Aorta (tissue), 5 donors: ENCODE measurements at regions of chr4 and their contacts with region 1.

Region 1: DNA sequence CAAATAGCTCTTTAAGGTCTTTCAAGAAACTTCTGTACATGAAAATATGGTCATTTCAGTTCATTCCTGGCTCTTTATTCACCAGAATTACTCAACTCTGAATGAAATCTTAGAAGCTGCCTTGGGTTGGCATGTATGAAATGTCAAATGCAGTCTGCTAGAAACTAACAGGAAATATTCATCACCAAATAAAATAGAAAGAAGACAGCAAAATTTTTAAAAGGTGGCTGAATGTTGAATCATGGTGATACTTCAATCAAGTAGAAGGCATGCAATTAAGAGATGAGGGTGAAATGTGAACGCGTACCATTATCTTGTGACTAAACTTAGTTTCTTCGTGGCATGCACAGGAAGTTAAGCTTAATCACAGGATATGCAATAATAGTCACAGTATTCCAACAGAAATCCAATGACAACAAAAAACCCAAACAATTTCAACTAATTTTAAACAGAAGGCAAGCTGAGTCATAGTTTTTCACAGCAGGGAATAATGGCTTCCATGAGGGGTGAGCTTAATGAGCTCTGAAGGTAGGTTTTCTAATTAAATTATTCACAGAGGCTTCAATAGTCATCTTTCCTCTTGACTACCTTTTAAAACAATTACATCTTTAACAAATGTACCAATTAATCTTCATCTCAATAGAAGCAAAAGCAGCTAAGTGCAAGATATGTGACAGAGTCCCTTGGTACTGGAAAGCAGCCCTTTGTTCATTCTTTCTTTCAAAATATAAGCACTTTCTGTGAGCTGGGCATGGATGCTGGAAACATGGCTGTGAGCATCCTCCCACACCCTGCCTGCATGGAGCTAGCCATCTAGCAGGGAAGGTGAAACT is 44.5 kb downstream of the SCFD2 start:
- DNase-seq: no peak
- ATAC-seq: peak; percentile 68
- H3K4me3 ChIP-seq: peak overlapping the region in 1 of 2 donors; percentile 48
- H3K27ac ChIP-seq: peak overlapping the region; percentile 49 to 94
- H3K4me1 ChIP-seq: peaks cover 0 to 4% of the 10 kb centered on the region in 2 donors
- H3K27me3 ChIP-seq: no peaks in the 10 kb centered on the region

Region 2: GRCh38 chr4:52143815-52144214 is 1177.6 kb before region 1 on chr4:
- intact Hi-C with region 1: no loop called
- DNase-seq: no peak
- ATAC-seq: peak; percentile 62
- H3K4me3 ChIP-seq: no peak overlapping the region
- H3K27ac ChIP-seq: no peak overlapping the region
- H3K4me1 ChIP-seq: no peaks in the 10 kb centered on the region
- H3K27me3 ChIP-seq: peaks cover 0 to 2% of the 10 kb centered on the region in 2 donors

Region 3: DNA sequence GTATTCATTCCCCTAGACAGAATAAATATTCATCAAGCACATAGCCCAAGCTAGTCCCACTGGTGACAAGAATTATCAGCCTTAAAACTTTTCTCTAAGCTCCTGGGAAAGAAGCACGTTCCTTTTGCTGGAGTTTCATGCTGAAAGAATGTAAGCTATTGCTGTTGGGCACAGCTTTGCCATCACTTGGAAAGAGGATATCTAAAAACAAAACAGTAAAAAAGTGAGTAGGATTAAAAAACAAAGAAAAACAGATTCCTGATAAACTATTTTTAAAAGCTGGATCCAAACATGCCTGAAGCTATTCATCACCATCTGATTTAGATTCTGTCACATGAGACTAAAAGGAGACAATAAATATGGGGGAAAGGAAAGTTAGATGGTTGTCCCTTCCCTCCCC is 132.4 kb before region 1 on chr4:
- intact Hi-C with region 1: no loop called
- DNase-seq: no peak
- ATAC-seq: peak; percentile 28
- H3K4me3 ChIP-seq: no peak overlapping the region
- H3K27ac ChIP-seq: peak overlapping the region; percentile 82 to 88
- H3K4me1 ChIP-seq: peaks cover 0 to 7% of the 10 kb centered on the region in 2 donors
- H3K27me3 ChIP-seq: no peaks in the 10 kb centered on the region

Region 4: GRCh38 chr4:53377319-53378170 is 56.2 kb after region 1 on chr4 and contains the start of gene FIP1L1:
- intact Hi-C with region 1: loop called in 1 of 2 experiments (anchors 5 kb)
- DNase-seq: peak; percentile 96 to 98
- ATAC-seq: peak; percentile 99
- H3K4me3 ChIP-seq: peak within 1 kb of the TSS; percentile 36 to 98
- H3K27ac ChIP-seq: peak within 1 kb of the TSS in 1 of 2 donors; percentile 34
- H3K4me1 ChIP-seq: no peaks in the 10 kb centered on the region
- H3K27me3 ChIP-seq: no peaks in the 10 kb centered on the region
- total RNA-seq, gene FIP1L1: 42.6 to 49.8 TPM

Region 5: DNA sequence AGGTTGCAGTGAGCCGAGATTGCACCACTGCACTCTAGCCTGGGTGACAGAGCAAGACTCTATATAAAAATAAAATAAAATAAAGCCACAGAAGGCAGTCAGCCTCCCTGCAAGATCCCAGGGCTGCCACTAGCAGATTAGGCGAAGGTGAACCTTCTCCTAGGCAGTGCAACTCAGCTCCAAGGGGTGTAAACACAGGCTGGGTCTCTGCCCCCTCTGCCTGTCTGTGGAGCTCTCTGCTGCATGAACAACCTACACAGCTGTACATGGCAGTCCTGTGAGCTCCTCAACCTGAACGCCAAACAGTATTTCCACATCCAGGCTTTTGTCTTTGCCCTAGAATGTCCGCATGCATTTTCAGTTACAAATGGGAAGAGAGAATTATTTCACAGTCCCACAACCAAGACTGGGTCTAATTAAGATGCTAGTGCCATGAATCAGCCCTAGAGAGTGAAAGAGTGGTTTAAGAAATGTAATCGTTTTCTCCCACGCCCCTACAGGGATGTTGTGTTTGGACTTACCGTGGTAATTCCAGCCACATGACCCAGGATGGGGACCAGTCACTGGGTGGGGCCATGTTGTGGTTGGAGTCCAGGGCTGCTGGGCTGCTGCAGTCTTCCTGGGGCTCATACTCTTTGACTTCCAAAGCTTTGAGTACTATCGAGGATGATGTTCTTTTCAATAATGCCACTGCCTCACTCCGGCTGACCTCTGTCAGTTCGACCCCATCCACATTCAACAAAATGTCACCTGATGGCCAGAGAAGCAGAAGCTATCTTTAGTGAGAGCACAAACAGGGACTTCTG is 155.1 kb after region 1 on chr4:
- intact Hi-C with region 1: no loop called
- DNase-seq: peak; percentile 80 to 83
- ATAC-seq: peak; percentile 80
- H3K4me3 ChIP-seq: no peak overlapping the region
- H3K27ac ChIP-seq: no peak overlapping the region
- H3K4me1 ChIP-seq: peaks cover 0 to 2% of the 10 kb centered on the region in 2 donors
- H3K27me3 ChIP-seq: no peaks in the 10 kb centered on the region